Gastrocnemius medialis (tissue), 4 donors: ENCODE measurements at regions of chr1 and their contacts with region 1.

Region 1: DNA sequence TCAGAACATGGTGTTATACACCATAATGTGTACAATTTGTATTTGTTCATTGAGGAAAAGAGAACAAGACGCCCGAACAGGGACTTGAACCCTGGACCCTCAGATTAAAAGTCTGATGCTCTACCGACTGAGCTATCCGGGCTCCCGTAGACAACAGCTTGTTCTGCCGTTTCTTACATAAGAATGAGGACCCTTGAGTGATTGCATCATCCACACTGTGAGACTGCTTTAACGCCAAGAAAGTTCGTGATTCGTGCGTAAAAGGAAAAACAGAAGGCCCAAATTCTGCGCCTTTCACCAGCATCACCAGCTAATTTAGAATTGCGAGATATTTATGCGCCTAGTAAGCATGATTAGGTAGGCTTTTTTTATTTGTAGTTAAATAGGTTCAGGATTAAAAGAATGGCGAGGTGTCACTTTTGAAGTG is 9.2 kb upstream of the MDM4 start:
- DNase-seq: peak; percentile 75 to 81
- ATAC-seq: peak; percentile 75 to 81
- H3K4me3 ChIP-seq: peak overlapping the region; percentile 51 to 67 (median 61)
- H3K27ac ChIP-seq: peak overlapping the region; percentile 83 to 85 (median 84)
- H3K4me1 ChIP-seq: peaks cover 8 to 13% of the 10 kb centered on the region in 2 donors
- H3K27me3 ChIP-seq: no peaks in the 10 kb centered on the region
- CTCF ChIP-seq: no peak
- POLR2A ChIP-seq: no peak

Region 2: DNA sequence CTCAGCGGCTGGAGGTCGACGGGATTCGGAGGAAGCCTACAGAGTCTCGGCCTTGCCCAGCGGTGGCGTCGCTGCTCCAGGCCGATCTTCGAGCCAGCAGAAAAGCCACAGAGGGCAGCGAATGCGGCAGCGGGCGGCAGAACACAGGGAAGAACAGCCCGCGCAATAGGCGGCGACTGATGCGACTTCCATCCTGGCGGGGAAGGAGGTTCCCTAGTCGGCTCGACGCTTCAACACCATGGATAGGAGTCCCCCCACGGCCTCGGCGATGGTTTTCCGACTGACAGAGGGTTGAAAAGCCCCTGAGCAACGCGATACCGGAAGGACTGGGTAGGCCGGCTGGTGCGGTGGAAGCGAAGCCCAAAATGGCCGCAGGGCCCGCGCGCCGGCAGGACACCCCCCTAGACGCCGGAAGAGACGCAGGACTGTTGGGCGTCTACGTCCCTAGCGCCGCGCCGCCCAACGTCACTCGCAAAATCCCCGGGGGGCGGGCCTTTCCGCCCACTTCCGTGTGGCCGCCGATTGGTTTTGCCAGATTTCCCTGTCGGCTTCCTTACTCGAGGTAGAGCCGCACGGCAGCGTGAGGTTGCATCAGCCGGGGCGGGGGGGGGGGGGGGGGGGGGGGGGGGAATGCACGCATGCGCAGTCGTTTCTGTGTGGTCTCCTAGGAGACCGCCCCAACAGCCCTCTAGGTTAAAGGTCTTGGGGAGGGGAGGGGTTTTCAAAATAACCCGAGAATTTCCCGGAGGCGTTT is 95.3 kb before region 1 on chr1 and contains the start of gene PPP1R15B:
- in situ Hi-C with region 1: no loop called
- intact Hi-C with region 1: loop called (anchors 1 kb)
- DNase-seq: peak; percentile 95 to 98
- ATAC-seq: peak; percentile 84 to 86
- H3K4me3 ChIP-seq: peak within 1 kb of the TSS; percentile 96 to 100 (median 98)
- H3K27ac ChIP-seq: peak within 1 kb of the TSS; percentile 99 to 100 (median 100)
- H3K4me1 ChIP-seq: peaks cover 12 to 17% of the 10 kb centered on the region in 2 donors
- H3K27me3 ChIP-seq: no peaks in the 10 kb centered on the region
- CTCF ChIP-seq: no peak
- POLR2A ChIP-seq: peak; percentile 95 to 98
- total RNA-seq, gene PPP1R15B: 23.8 to 33.0 (median 25.9) TPM

Region 3: GRCh38 chr1:204431310-204432165 is 75.4 kb before region 1 on chr1:
- in situ Hi-C with region 1: no loop called
- intact Hi-C with region 1: loop called (anchors 1 kb)
- DNase-seq: peak; percentile 57 to 72
- ATAC-seq: peak; percentile 40
- H3K4me3 ChIP-seq: no peak overlapping the region
- H3K27ac ChIP-seq: peak overlapping the region in 3 of 4 donors; percentile 45 to 89 (median 87)
- H3K4me1 ChIP-seq: peaks cover 9 to 27% of the 10 kb centered on the region in 2 donors
- H3K27me3 ChIP-seq: no peaks in the 10 kb centered on the region
- CTCF ChIP-seq: peak; percentile 73 to 95 (median 90)
- POLR2A ChIP-seq: no peak

Region 4: GRCh38 chr1:204446370-204447111 is 60.4 kb before region 1 on chr1:
- in situ Hi-C with region 1: loop called (anchors 5 kb)
- intact Hi-C with region 1: loop called (anchors 1 kb)
- DNase-seq: peak; percentile 65 to 82
- ATAC-seq: peak; percentile 50 to 54
- H3K4me3 ChIP-seq: peak overlapping the region in 1 of 4 donors; percentile 17
- H3K27ac ChIP-seq: peak overlapping the region; percentile 90 to 98 (median 94)
- H3K4me1 ChIP-seq: peaks cover 63 to 85% of the 10 kb centered on the region in 2 donors
- H3K27me3 ChIP-seq: no peaks in the 10 kb centered on the region
- CTCF ChIP-seq: peak; percentile 89 to 93 (median 91)
- POLR2A ChIP-seq: no peak

Region 5: DNA sequence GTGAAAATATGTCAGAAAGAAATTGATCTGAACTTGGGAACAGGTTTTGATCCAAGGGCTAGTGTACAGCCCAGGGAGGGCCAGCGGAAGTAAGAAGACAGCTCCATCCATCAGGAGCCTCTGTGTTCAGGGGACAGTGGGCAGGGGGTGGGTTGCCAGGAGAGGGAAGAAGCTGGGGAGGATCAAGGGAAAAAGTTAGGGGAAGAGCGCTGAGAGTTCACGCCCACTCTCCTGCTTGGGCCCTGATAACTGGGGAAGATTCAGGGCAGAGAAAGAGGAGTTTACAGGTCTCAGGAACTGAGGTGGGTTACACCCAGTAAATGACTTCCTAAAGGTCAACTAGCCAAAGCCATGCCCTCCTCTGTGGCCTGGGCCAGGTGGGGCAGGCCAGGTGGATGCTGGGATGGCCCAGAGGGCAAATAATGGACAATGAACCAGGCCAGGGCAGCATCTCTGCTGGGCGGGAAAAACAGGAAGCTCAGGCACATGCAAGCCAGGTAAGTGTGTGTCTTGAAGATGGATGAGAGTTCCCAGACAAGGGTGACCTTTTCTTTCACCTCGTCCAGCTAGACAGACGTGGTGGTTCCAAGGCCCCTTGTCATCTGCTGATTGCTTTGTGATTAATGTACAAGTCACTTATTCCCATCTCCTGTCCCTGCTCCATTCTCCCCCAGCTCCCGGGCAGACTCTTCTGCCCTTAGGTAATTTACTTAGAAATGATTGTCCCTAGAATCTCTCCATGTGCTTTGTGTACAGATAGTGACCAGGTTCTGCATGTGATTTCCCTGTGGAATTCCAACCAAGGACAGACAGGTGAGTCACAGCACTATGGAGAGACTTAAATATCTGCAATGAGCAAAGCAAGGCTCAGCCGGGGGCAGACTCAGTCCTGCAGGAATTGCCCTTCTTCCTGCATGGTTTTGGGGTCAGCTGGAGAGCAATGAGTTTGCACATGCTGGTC is 66.2 kb after region 1 on chr1:
- in situ Hi-C with region 1: no loop called
- intact Hi-C with region 1: no loop called
- DNase-seq: no peak
- ATAC-seq: no peak
- H3K4me3 ChIP-seq: no peak overlapping the region
- H3K27ac ChIP-seq: no peak overlapping the region
- H3K4me1 ChIP-seq: no peaks in the 10 kb centered on the region
- H3K27me3 ChIP-seq: no peaks in the 10 kb centered on the region
- CTCF ChIP-seq: no peak
- POLR2A ChIP-seq: no peak

Region 6: DNA sequence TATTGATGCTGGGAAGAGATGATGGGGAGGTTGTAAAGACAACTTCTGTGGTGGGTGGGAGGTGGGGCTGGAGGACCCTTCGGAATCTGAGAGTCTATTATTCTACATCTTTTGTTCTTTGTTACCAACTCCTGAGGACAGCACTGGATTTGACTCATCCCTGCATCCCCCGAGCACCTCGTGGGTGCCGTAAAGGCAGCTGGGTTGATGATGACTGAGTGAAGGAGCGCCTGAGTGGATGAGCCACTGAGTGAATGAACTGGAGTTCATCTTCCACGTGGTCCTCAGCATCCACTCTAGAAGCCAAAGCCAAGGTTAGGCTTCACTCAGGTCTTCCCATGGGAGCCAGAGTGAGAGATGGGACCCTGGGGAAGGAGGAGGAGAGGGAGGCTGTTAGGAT is 100.9 kb after region 1 on chr1:
- in situ Hi-C with region 1: no loop called
- intact Hi-C with region 1: no loop called
- DNase-seq: no peak
- ATAC-seq: no peak
- H3K4me3 ChIP-seq: no peak overlapping the region
- H3K27ac ChIP-seq: no peak overlapping the region
- H3K4me1 ChIP-seq: no peaks in the 10 kb centered on the region
- H3K27me3 ChIP-seq: peaks cover 0 to 7% (median 0%) of the 10 kb centered on the region in 3 donors
- CTCF ChIP-seq: no peak
- POLR2A ChIP-seq: no peak